Sigmoid colon (tissue), 7 donors: ENCODE measurements at regions of chr2 and their contacts with region 1.

Region 1: GRCh38 chr2:100562732-100563720 is at the start of gene PDCL3:
- DNase-seq: peak; percentile 99
- H3K4me3 ChIP-seq: peak within 1 kb of the TSS; percentile 70 to 87 (median 74)
- H3K27ac ChIP-seq: peak within 1 kb of the TSS; percentile 85 to 92 (median 90)
- H3K4me1 ChIP-seq: peaks cover 0 to 30% (median 26%) of the 10 kb centered on the region in 4 donors
- H3K27me3 ChIP-seq: no peaks in the 10 kb centered on the region
- CTCF ChIP-seq: no peak
- EP300 ChIP-seq: peak in 1 of 4 donors; percentile 69
- POLR2A ChIP-seq: peak in 1 of 2 donors; percentile 67
- total RNA-seq, gene PDCL3: 23.5 to 41.3 (median 31.3) TPM

Region 2: GRCh38 chr2:100427628-100428258 is 135.3 kb before region 1 on chr2:
- intact Hi-C with region 1: loop called (anchors 2 kb)
- DNase-seq: peak; percentile 91
- H3K4me3 ChIP-seq: no peak overlapping the region
- H3K27ac ChIP-seq: peak overlapping the region in 2 of 4 donors; percentile 27 to 55
- H3K4me1 ChIP-seq: peaks cover 0 to 32% (median 9%) of the 10 kb centered on the region in 4 donors
- H3K27me3 ChIP-seq: no peaks in the 10 kb centered on the region
- CTCF ChIP-seq: peak; percentile 27 to 57 (median 42)
- EP300 ChIP-seq: no peak
- POLR2A ChIP-seq: no peak

Region 3: DNA sequence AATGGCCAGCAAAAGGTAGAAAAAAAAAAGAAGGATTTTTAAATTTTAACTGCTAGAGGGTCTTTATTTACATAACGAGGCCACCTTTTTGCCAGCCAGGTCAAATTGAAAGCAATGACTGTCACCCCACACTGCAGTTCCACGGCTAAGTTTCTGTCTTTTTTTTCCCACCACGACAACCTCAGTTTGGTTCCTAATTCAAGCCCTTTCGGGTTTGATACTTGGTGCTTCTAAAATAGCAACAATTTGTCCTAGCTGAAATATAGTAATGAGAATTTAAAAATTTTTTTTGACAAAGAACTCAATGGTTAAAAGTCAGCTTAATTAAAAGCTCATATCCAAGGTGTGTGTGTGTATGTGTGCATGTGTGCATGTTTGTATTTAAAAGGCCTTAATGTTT is 109.2 kb before region 1 on chr2:
- intact Hi-C with region 1: loop called (anchors 2 kb)
- DNase-seq: no peak
- H3K4me3 ChIP-seq: no peak overlapping the region
- H3K27ac ChIP-seq: no peak overlapping the region
- H3K4me1 ChIP-seq: peaks cover 0 to 9% (median 0%) of the 10 kb centered on the region in 4 donors
- H3K27me3 ChIP-seq: no peaks in the 10 kb centered on the region
- CTCF ChIP-seq: no peak
- EP300 ChIP-seq: no peak
- POLR2A ChIP-seq: no peak

Region 4: DNA sequence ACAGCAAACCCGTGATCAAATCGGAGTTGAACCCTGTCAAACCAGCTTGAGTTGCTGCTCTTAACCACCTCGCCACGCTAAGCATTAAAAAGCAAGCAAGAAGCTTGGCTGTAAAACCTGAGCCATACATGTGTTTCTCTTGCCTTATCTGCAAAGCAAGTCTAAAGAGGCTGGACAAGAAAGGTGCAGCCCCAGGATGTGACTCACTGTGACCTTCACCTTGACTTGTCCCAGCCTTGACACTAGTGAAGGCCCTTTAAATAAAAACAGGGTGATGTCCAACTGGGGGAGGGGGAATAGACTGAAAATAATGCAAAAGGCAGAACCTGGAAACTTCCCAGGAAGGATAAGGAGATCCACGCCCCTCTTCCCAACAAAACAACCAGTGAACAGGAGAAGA is 129.4 kb after region 1 on chr2:
- intact Hi-C with region 1: no loop called
- DNase-seq: no peak
- H3K4me3 ChIP-seq: no peak overlapping the region
- H3K27ac ChIP-seq: no peak overlapping the region
- H3K4me1 ChIP-seq: no peaks in the 10 kb centered on the region
- H3K27me3 ChIP-seq: no peaks in the 10 kb centered on the region
- CTCF ChIP-seq: no peak
- EP300 ChIP-seq: no peak
- POLR2A ChIP-seq: no peak